Ascending aorta (tissue), 2 donors: ENCODE measurements at regions of chr4 and their contacts with region 1.

Region 1: DNA sequence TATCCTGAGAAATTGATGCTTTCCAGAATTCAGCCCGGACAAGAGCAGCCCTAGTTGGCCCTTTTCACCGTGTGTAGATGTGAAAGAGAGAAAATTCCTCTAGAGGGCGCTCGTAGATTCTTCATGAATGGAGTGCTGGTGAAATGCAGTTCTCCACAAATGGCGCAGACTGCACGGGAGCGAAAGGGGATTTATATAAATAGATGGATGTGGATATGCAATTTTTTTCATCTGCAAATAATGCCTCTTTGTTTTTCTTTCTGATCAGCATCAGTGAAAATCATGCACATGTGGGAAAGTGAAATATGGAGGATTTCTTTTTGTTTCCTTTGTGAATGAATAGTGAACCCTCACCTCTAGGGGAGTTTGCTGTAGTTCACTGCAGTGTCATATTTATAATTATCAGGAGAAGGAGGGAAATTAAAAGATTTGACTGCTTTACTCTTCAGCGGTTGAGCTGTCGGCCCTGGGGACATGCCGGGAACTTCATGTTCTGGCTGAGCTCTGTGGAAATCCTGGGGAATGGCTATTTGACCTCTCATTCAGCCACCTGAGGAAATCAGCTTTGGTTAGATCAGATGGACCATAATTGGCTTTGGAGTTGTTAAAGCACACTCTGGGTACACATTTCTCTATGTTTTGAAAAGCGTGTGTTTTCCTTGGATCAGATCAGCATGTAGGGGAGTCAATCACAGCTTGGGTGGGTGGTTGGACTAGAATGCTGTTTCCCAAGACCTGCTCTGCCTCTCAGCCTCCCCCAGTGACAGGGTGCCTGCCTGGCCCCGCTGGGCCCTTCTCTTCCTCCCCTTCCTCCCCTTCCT is 115.0 kb upstream of the SHISA3 start:
- DNase-seq: no peak
- H3K4me3 ChIP-seq: no peak overlapping the region
- H3K27ac ChIP-seq: no peak overlapping the region
- H3K4me1 ChIP-seq: no peaks in the 10 kb centered on the region
- H3K27me3 ChIP-seq: no peaks in the 10 kb centered on the region
- CTCF ChIP-seq: peak; percentile 39 to 75 (median 56)

Region 2: GRCh38 chr4:42197341-42197740 is 85.0 kb before region 1 on chr4:
- intact Hi-C with region 1: no loop called
- DNase-seq: no peak
- H3K4me3 ChIP-seq: no peak overlapping the region
- H3K27ac ChIP-seq: no peak overlapping the region
- H3K4me1 ChIP-seq: no peaks in the 10 kb centered on the region
- H3K27me3 ChIP-seq: no peaks in the 10 kb centered on the region
- CTCF ChIP-seq: no peak

Region 3: GRCh38 chr4:42371306-42372252 is 89.3 kb after region 1 on chr4:
- intact Hi-C with region 1: loop called (anchors 5 kb)
- DNase-seq: no peak
- H3K4me3 ChIP-seq: no peak overlapping the region
- H3K27ac ChIP-seq: no peak overlapping the region
- H3K4me1 ChIP-seq: no peaks in the 10 kb centered on the region
- H3K27me3 ChIP-seq: no peaks in the 10 kb centered on the region
- CTCF ChIP-seq: peak; percentile 16 to 56 (median 30)

Region 4: DNA sequence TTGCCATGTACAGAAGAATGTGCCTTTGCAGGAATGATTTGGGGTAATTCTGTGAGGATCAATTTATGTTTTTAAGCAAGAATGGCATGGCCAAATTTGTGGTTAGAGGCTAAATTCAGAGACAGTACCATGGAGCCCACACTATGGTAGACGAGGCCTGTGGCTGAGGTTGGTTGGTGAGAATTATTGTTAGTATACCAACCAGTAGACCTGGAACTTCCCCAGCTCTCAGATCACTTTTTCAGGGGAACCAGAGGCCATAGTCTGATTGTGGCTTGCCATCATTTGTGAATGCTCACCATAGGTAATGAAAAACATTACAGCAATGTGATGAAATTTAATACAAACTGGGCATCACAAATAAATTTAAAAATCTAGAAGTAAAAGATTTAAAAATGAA is 171.3 kb after region 1 on chr4:
- intact Hi-C with region 1: no loop called
- DNase-seq: no peak
- H3K4me3 ChIP-seq: no peak overlapping the region
- H3K27ac ChIP-seq: no peak overlapping the region
- H3K4me1 ChIP-seq: no peaks in the 10 kb centered on the region
- H3K27me3 ChIP-seq: no peaks in the 10 kb centered on the region
- CTCF ChIP-seq: no peak

Region 5: DNA sequence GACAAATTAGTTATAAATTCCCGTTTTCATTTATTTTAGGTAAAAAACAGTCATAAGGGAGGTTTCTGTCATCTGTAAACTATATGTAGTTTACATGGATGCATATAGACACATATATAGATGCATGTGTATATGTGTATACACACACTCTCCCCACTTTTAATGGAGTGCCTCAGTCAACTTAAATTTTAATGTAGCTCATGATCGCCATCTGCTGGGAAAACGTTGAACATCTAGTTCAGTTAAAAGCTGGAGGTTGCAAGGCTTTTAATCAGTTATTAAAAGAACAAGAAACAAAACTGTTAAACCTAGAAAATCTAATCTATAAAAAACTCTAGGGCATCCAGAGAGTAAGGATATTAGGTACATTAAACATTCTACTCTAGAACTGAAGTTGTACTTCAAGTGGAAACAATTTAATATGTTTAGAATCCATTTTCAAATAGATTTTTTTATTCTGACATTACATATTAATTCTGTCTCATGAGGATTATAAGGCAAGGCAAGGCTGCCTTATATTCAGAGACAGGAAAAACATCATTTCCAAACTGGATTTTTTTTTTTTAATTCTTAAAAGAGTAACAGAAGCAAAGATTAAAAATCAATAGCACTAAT is 237.6 kb after region 1 on chr4:
- intact Hi-C with region 1: loop called (anchors 1 kb)
- DNase-seq: peak in 1 of 2 donors; percentile 67
- H3K4me3 ChIP-seq: no peak overlapping the region
- H3K27ac ChIP-seq: no peak overlapping the region
- H3K4me1 ChIP-seq: no peaks in the 10 kb centered on the region
- H3K27me3 ChIP-seq: no peaks in the 10 kb centered on the region
- CTCF ChIP-seq: peak; percentile 30 to 65 (median 63)